ENCODE measurements at regions of chr6 and their contacts with region 1.

Region 1: GRCh38 chr6:34986845-34987246 is 97.8 kb downstream of the ANKS1A start:
- DNase-seq: peak; percentile 76
- CTCF ChIP-seq: peak; percentile 56

Region 2: DNA sequence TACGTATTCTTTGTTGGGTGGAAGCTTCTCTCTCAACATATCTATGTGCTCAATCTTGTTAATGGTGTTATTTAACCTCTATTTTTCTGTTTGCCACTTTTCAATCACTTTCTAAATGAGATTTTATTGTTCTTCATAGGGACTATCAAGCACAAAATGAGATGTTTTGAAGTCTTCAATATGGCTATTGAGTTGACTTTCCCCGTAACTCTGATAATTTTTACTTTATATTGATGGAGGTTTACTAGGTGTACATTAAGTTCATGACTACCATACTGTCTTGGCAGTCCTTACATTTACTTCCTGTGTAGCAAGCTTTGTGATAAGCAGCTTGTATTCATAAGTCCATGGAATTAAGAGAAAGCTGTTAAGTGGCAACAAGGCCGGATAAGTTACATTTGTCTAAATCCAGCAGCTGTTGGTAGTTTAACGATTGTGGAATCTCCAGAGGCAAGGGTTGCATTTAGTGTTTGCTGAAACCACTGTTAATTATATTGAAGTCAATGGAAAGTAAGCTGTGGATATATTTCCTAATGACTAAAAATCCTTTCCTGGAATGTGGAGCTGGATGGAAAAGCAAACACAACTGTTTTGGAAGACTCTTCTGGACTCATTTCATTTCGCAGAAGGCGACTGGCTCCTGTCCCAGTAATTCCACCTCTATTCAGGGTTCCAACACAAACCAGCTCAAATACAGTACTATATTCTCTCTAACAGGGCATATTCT is 680.7 kb before region 1 on chr6:
- in situ Hi-C with region 1: no loop called
- DNase-seq: no peak
- CTCF ChIP-seq: no peak

Region 3: DNA sequence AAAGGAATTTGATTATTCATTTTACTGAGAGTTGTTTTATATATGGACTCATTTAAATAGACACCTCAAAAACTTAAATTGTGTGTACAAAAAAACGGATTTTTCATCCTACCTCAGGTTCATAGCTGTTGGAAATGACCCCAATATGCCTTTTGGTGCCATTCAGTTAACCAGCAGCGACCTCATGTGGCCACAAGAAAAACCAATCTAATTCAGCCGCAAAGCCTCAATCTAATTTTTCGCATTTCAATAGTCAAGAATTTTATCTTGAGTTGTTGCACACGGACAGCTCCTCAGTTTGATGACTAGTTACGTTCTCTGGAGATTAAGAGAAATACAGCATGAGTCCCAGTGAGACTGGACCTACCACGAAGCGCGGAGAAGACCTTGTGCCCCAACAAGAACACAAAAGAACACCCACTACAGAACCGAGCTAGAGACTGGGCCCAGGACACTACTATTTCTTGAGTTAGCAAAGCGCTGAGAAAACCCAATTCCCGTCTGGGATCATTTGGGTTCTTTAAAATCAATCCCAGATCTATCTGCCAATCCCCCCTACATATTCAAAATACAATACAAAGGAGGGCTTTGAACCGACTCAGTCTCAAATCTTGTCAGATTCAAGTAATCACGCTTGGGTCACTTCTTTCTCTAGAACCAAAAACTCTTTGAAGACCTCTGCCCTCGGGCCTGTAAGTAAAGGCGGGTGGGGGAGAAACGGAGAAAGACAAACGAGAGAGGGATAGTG is 153.2 kb after region 1 on chr6:
- in situ Hi-C with region 1: loop called (anchors 10 kb)
- DNase-seq: peak; percentile 62
- CTCF ChIP-seq: peak; percentile 74

Region 4: GRCh38 chr6:35213824-35214756 is 227.2 kb after region 1 on chr6 and contains the start of gene SCUBE3:
- in situ Hi-C with region 1: loop called (anchors 25 kb)
- DNase-seq: peak; percentile 76
- CTCF ChIP-seq: no peak